Endothelial cell of umbilical vein (primary cell): ENCODE measurements at regions of chr19 and their contacts with region 1.

Region 1: GRCh38 chr19:58362272-58362994 is at the start of gene ZNF497:
- DNase-seq: peak; percentile 98
- H3K4me3 ChIP-seq: peak within 1 kb of the TSS; percentile 35 to 66 (median 51)
- H3K27ac ChIP-seq: peak within 1 kb of the TSS; percentile 57
- H3K4me1 ChIP-seq: peaks cover 3% of the 10 kb centered on the region
- H3K27me3 ChIP-seq: peaks cover 12 to 14% of the 10 kb centered on the region in 2 experiments
- CTCF ChIP-seq: peak in 1 of 2 donors; percentile 9
- POLR2A ChIP-seq: peak; percentile 93
- total RNA-seq, gene ZNF497: 0.42 and 1.3 TPM in 2 replicates

Region 2: DNA sequence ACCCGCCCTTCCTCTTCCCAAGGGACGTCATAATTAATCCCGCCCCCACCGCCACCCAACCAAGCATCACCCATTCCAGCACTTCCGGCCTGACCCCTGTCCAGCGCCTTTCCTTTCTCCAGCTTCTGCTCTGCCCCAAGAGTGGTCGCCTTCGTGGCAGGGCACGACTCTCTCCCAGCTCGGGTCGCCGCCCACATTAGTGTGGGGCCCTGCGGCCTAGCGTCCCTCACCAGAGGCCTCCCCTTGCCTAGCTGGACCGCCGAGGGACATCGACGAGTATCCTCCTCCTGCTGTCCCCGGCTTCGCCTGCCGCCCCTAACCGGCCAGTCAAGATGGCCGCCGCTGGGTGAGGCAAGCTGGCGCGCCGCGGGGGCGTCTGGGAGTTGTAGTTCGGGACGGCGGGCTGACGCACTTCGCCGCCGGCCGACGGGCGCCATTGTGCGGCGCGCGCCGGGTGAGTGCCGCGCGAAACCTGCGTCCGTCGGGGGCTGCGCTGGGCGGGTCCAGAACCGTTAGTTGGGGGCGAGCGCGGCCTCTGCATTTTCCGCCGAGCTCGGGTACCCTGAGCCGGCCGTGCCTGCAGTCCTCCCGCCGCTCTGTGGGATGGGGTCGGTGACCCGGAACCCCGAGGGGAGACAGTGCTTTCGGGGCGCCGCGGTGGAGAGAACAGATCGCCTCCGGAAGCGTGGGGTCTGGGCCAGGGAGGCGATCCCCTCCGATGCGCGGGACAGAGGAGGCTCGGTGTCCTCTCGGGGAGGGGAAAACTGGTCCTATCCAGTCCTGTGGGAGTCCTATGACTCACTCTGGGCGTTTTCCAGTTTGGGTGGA is 179.2 kb before region 1 on chr19 and contains the start of gene ZNF274:
- CTCF ChIA-PET with region 1: no interaction called
- POLR2A ChIA-PET with region 1: interaction called, 6 read pairs
- dilution Hi-C with region 1: no loop called
- intact Hi-C with region 1: loop called (anchors 2 kb)
- DNase-seq: peak; percentile 88
- H3K4me3 ChIP-seq: peak within 1 kb of the TSS; percentile 18 to 98 (median 62)
- H3K27ac ChIP-seq: peak within 1 kb of the TSS; percentile 89
- H3K4me1 ChIP-seq: no peaks in the 10 kb centered on the region
- H3K27me3 ChIP-seq: no peaks in the 10 kb centered on the region
- CTCF ChIP-seq: no peak
- POLR2A ChIP-seq: peak; percentile 7
- total RNA-seq, gene ZNF274: 18.3 and 18.8 TPM in 2 replicates

Region 3: DNA sequence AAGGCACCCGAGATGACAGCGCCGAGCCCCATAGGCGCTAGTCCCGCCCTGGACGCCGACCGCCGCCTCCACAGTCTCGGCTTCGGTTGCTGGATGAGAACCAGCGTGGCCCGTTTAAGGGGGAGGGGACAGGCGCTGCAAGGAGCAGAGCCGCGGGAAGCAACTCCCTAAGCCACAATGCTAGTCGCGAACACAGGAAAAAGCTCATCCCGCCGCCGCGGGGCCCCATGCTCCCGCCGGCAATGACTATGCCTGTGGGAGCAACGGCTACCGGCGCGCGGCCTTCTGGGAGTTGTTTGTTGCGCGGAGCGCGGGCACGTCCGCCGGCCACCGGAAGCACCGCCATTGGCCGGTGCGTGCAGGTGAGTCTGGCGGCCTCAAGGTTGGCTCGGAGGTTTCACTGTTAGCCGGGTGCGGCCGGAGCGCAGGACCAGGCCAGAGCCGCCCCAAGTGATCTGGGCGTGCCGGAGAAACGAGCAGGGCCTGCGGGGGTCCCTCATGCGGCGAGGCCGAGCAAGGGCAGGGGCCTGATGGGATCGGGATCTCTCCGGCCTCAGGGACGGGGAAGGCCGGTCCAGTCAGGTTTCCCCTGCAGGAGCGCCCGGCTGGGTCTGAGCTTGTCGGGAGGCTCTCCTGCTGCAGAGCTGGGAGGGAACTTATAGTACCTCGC is 133.7 kb before region 1 on chr19 and contains the start of gene ZNF544:
- CTCF ChIA-PET with region 1: no interaction called
- POLR2A ChIA-PET with region 1: no interaction called
- dilution Hi-C with region 1: no loop called
- intact Hi-C with region 1: loop called (anchors 2 kb)
- DNase-seq: peak; percentile 84
- H3K4me3 ChIP-seq: peak within 1 kb of the TSS; percentile 53 to 66 (median 61)
- H3K27ac ChIP-seq: peak within 1 kb of the TSS; percentile 42
- H3K4me1 ChIP-seq: peaks cover 10% of the 10 kb centered on the region
- H3K27me3 ChIP-seq: no peaks in the 10 kb centered on the region
- CTCF ChIP-seq: peak; percentile 6 to 40
- POLR2A ChIP-seq: peak; percentile 92
- total RNA-seq, gene ZNF544: 39.3 and 45.4 TPM in 2 replicates

Region 4: GRCh38 chr19:58243351-58243750 is 119.1 kb before region 1 on chr19:
- CTCF ChIA-PET with region 1: no interaction called
- POLR2A ChIA-PET with region 1: no interaction called
- dilution Hi-C with region 1: no loop called
- intact Hi-C with region 1: no loop called
- DNase-seq: no peak
- H3K4me3 ChIP-seq: no peak overlapping the region
- H3K27ac ChIP-seq: no peak overlapping the region
- H3K4me1 ChIP-seq: no peaks in the 10 kb centered on the region
- H3K27me3 ChIP-seq: no peaks in the 10 kb centered on the region
- CTCF ChIP-seq: no peak
- POLR2A ChIP-seq: no peak

Region 5: GRCh38 chr19:58278157-58279041 is 84.0 kb before region 1 on chr19 and contains the start of gene ZNF8:
- CTCF ChIA-PET with region 1: no interaction called
- POLR2A ChIA-PET with region 1: no interaction called
- dilution Hi-C with region 1: no loop called
- intact Hi-C with region 1: loop called (anchors 1 kb)
- DNase-seq: peak; percentile 99
- H3K4me3 ChIP-seq: peak within 1 kb of the TSS; percentile 67 to 72 (median 70)
- H3K27ac ChIP-seq: peak within 1 kb of the TSS; percentile 76
- H3K4me1 ChIP-seq: peaks cover 8% of the 10 kb centered on the region
- H3K27me3 ChIP-seq: no peaks in the 10 kb centered on the region
- CTCF ChIP-seq: peak in 1 of 2 donors; percentile 22
- POLR2A ChIP-seq: peak; percentile 68
- total RNA-seq, gene ZNF8: 6.3 and 6.8 TPM in 2 replicates

Region 6: GRCh38 chr19:58305065-58305931 is 57.1 kb before region 1 on chr19 and contains the start of gene ERVK3-1:
- CTCF ChIA-PET with region 1: no interaction called
- POLR2A ChIA-PET with region 1: no interaction called
- dilution Hi-C with region 1: no loop called
- intact Hi-C with region 1: loop called (anchors 2 kb)
- DNase-seq: peak; percentile 98
- H3K4me3 ChIP-seq: peak within 1 kb of the TSS; percentile 44 to 72 (median 49)
- H3K27ac ChIP-seq: peak within 1 kb of the TSS; percentile 95
- H3K4me1 ChIP-seq: peaks cover 9% of the 10 kb centered on the region
- H3K27me3 ChIP-seq: no peaks in the 10 kb centered on the region
- CTCF ChIP-seq: no peak
- POLR2A ChIP-seq: peak; percentile 92
- total RNA-seq, gene ERVK3-1: 25.8 and 28.4 TPM in 2 replicates

Region 7: GRCh38 chr19:58326914-58327726 is 35.3 kb before region 1 on chr19 and contains the start of gene ZSCAN22:
- CTCF ChIA-PET with region 1: interaction called, 3 read pairs
- POLR2A ChIA-PET with region 1: interaction called, 9 read pairs
- dilution Hi-C with region 1: no loop called
- intact Hi-C with region 1: loop called (anchors 1 kb)
- DNase-seq: peak; percentile 96
- H3K4me3 ChIP-seq: peak within 1 kb of the TSS; percentile 3 to 63 (median 56)
- H3K27ac ChIP-seq: peak within 1 kb of the TSS; percentile 1
- H3K4me1 ChIP-seq: peaks cover 12% of the 10 kb centered on the region
- H3K27me3 ChIP-seq: no peaks in the 10 kb centered on the region
- CTCF ChIP-seq: no peak
- POLR2A ChIP-seq: peak; percentile 76
- total RNA-seq, gene ZSCAN22: 3.6 and 3.7 TPM in 2 replicates

Region 8: GRCh38 chr19:58475714-58476497 is 113.5 kb after region 1 on chr19 and contains the start of gene ZNF446:
- CTCF ChIA-PET with region 1: no interaction called
- POLR2A ChIA-PET with region 1: no interaction called
- dilution Hi-C with region 1: no loop called
- intact Hi-C with region 1: loop called (anchors 1 kb)
- DNase-seq: peak; percentile 97
- H3K4me3 ChIP-seq: peak within 1 kb of the TSS; percentile 49 to 70 (median 56)
- H3K27ac ChIP-seq: peak within 1 kb of the TSS; percentile 73
- H3K4me1 ChIP-seq: peaks cover 9% of the 10 kb centered on the region
- H3K27me3 ChIP-seq: no peaks in the 10 kb centered on the region
- CTCF ChIP-seq: no peak
- POLR2A ChIP-seq: peak; percentile 70
- total RNA-seq, gene ZNF446: 6.6 and 7.0 TPM in 2 replicates